Activated CD4-positive, alpha-beta memory T cell treated with anti-CD3 and anti-CD28 coated beads for 36 hours (primary cell): ENCODE measurements at regions of chr6 and their contacts with region 1.

Region 1: DNA sequence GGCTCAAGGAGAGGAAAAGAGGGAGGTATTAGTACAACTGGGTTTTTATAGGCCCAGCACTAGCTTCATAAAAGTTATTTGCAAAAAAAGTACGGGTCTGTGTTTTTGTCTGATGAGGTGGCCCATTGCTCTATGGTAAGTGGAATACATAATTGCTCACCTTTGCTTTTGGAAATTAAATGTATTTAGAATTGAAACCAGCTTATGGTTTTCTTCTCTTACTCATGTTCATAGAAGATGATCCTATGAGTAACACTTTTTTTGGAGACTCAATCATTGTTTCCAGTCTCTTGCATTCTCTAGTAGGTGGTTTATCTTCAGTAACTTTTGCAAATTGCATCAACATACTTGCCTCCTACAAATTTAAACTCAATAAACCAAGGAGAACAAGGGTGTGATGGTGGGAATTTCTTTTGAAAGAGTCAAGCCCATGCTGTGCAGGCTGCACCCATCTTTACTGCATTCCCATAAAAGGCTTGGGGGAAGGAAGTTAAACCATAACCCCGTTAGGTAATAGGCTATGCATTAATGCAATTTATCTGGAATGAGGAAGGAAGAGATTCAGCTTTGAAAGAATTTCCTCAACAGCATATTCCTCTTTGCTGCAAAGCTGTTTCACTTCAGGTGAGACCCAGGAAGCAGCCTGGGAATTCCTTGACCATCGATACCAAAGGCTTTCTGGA is 48.5 kb upstream of the EDN1 start:
- DNase-seq: no peak
- H3K4me3 Mint-ChIP-seq: no peak overlapping the region
- H3K27ac Mint-ChIP-seq: no peak overlapping the region
- H3K4me1 Mint-ChIP-seq: peaks cover 22% of the 10 kb centered on the region
- H3K27me3 Mint-ChIP-seq: peaks cover 2% of the 10 kb centered on the region

Region 2: GRCh38 chr6:11460001-11460668 is 781.5 kb before region 1 on chr6:
- CTCF ChIA-PET with region 1: no interaction called
- POLR2A ChIA-PET with region 1: no interaction called
- intact Hi-C with region 1: no loop called
- DNase-seq: peak; percentile 23
- H3K4me3 Mint-ChIP-seq: peak overlapping the region; percentile 57
- H3K27ac Mint-ChIP-seq: peak overlapping the region; percentile 90
- H3K4me1 Mint-ChIP-seq: peaks cover 31% of the 10 kb centered on the region
- H3K27me3 Mint-ChIP-seq: no peaks in the 10 kb centered on the region

Region 3: DNA sequence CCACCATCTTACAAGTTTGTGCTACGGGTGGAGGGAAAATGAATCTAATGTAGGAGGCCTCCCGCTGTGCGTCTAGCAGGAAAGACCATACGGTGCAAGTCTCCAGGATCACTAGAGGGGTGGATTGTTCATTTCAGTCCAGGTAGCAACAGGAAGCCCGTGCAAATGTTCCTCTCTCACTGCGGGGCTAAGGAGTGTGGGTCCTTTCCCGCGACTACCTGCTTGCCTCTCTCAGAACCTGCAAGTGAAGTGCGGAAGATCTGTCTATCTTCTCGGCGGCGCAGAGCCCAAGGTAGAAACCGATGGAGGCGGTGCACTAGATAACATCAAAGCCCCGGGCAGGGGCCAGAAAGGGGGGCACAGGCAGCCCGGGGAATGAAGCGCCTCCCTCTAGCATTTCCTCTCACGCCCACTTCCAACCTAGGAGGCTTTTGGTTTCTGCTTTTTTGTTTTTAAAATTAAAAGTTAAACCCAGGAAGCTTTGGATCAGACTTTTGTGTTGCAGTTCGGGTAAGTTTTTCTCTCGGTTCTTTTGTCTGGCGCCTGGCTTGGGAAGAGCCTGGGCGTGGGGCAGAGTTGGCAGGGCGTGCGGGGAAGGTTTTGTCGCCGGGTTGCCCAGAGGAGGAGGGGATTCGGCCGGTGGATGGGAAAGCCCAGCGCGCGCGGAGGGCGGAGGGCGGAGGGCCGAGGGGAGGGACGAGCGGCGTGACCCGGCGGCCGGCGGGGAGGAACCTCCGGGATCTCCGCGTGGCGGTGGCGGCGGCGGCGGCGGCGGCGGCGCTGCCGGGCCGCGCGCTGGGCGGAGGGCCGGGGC is 233.1 kb before region 1 on chr6:
- CTCF ChIA-PET with region 1: no interaction called
- POLR2A ChIA-PET with region 1: no interaction called
- intact Hi-C with region 1: no loop called
- DNase-seq: peak; percentile 88
- H3K4me3 Mint-ChIP-seq: peak overlapping the region; percentile 93
- H3K27ac Mint-ChIP-seq: peak overlapping the region; percentile 98
- H3K4me1 Mint-ChIP-seq: peaks cover 22% of the 10 kb centered on the region
- H3K27me3 Mint-ChIP-seq: no peaks in the 10 kb centered on the region

Region 4: GRCh38 chr6:12258196-12259075 is 16.8 kb after region 1 on chr6:
- CTCF ChIA-PET with region 1: no interaction called
- POLR2A ChIA-PET with region 1: no interaction called
- intact Hi-C with region 1: no loop called
- DNase-seq: no peak
- H3K4me3 Mint-ChIP-seq: no peak overlapping the region
- H3K27ac Mint-ChIP-seq: no peak overlapping the region
- H3K4me1 Mint-ChIP-seq: no peaks in the 10 kb centered on the region
- H3K27me3 Mint-ChIP-seq: peaks cover 6% of the 10 kb centered on the region

Region 5: GRCh38 chr6:12270551-12271230 is 29.1 kb after region 1 on chr6:
- CTCF ChIA-PET with region 1: no interaction called
- POLR2A ChIA-PET with region 1: no interaction called
- intact Hi-C with region 1: loop called (anchors 2 kb)
- DNase-seq: no peak
- H3K4me3 Mint-ChIP-seq: no peak overlapping the region
- H3K27ac Mint-ChIP-seq: no peak overlapping the region
- H3K4me1 Mint-ChIP-seq: peaks cover 4% of the 10 kb centered on the region
- H3K27me3 Mint-ChIP-seq: peaks cover 5% of the 10 kb centered on the region